ENCODE measurements at regions of chr11 and their contacts with region 1.

Region 1: DNA sequence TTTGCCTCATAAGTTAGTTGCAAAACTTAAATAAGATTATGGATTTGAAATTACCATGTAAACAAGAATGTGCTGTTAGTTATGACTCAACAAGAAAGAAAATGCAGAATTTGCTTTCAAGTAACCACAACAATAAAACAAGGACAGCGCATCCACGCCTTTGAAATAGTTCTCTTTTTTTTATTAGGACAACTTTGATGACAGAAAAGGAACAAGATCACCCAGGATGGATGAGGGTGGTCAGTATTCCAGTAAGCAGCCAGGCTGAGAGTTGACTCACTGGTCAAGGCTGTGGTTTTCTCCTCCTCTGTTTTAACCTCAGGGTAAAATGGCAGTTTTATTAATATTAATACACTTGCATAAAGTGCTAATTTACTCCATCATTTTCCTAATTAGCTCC is 544.4 kb downstream of the OPCML start:
- DNase-seq: no peak
- H3K4me3 Mint-ChIP-seq: no peak overlapping the region
- H3K27ac Mint-ChIP-seq: no peak overlapping the region
- H3K4me1 Mint-ChIP-seq: no peaks in the 10 kb centered on the region
- H3K27me3 Mint-ChIP-seq: peaks cover 2% of the 10 kb centered on the region

Region 2: GRCh38 chr11:132937016-132937415 is 50.9 kb before region 1 on chr11:
- CTCF ChIA-PET with region 1: no interaction called
- POLR2A ChIA-PET with region 1: no interaction called
- intact Hi-C with region 1: no loop called
- DNase-seq: no peak
- H3K4me3 Mint-ChIP-seq: no peak overlapping the region
- H3K27ac Mint-ChIP-seq: no peak overlapping the region
- H3K4me1 Mint-ChIP-seq: no peaks in the 10 kb centered on the region
- H3K27me3 Mint-ChIP-seq: peaks cover 5% of the 10 kb centered on the region

Region 3: DNA sequence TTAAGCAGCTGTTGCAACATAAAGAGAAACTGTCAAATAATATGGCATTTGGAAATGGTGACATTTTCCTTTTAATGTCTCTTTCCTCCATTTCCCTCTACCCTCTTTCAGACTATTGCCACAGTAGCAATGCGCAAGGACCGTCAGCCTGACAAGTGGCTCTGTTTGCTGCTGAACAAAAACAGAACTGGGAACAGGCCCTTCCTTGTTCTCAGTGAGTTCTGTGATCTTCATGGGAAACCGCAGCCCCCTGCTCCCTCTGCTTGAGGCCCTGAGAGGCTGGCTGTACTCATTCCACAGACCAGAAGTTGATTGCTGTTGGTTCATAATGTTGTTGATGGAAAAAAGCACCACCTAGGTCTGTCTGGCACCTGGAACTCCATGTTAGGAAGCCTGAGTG is 15.4 kb before region 1 on chr11:
- CTCF ChIA-PET with region 1: no interaction called
- POLR2A ChIA-PET with region 1: no interaction called
- intact Hi-C with region 1: no loop called
- DNase-seq: no peak
- H3K4me3 Mint-ChIP-seq: no peak overlapping the region
- H3K27ac Mint-ChIP-seq: no peak overlapping the region
- H3K4me1 Mint-ChIP-seq: no peaks in the 10 kb centered on the region
- H3K27me3 Mint-ChIP-seq: peaks cover 3% of the 10 kb centered on the region

Region 4: DNA sequence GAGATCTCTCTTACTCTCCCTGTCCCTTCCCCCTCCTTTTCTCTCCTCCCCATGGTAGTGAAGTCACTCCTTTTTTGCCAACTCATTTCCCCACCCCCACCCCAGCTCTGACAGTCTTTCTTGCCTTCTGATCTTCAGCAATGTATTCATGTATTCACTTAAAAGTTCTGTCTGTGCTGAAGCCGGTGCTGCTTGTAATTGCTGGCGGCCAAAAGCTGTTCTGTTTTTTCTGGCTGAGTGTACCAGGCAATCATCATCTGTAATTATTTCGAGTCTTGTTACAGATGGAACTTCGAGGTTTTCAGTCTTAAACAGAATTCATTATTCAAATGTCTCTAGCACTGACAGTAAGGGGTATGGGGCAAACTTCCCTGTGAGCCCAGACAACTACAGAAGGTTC is 757.9 kb after region 1 on chr11:
- CTCF ChIA-PET with region 1: no interaction called
- POLR2A ChIA-PET with region 1: no interaction called
- intact Hi-C with region 1: loop called (anchors 10 kb)
- DNase-seq: no peak
- H3K4me3 Mint-ChIP-seq: no peak overlapping the region
- H3K27ac Mint-ChIP-seq: no peak overlapping the region
- H3K4me1 Mint-ChIP-seq: no peaks in the 10 kb centered on the region
- H3K27me3 Mint-ChIP-seq: peaks cover 2% of the 10 kb centered on the region